ENCODE measurements at regions of chr6 and their contacts with region 1.

Region 1: DNA sequence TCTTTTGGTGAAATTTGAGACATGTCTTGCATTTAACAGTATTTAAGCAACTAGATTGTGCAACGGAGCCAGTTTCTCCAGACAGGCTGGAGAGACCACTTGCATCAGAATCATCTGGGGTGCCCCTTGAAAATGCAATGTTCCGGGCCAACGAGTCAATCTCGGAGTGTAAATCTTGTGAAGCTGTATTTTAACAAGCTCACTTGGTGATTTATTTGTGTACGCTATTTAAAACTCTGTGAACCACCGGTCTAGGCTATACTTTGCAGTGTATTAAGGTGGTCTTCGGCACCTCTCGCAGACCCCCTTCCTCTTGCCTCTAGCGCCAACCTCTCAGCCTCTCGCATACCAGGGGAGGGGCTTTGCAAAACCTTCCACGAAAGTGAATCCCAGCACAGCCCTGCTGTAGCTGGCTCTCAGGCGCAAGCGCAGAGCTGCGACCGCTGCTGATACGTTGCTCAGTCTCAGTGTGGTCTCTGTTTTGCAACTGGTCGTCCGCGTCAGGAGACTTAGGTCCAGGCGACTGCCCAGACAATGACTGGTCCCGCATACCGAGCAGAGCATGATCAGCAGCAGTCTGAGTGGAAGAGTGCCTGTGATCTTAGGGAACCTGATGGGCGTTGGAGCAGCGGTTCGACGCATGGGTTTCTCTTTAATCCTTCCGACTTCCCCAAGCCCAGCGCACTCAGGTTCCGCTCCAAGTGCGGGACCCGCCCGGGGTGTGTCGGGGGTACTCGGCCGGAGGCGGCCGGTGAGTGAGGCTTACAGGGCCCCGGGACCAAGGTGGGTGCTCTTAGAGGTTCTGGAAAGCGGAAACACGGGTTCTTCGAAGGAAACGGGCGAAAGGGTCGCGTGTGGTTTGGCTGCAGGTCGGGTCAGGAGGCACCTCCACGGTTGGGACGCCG is at the start of gene ZNF391:
- DNase-seq: peak; percentile 50 to 71 (median 62)
- H3K4me3 ChIP-seq: peak within 1 kb of the TSS; percentile 62 to 95
- H3K4me3 Mint-ChIP-seq: peak within 1 kb of the TSS; percentile 94 to 99 (median 97)
- H3K27ac ChIP-seq: peak within 1 kb of the TSS; percentile 43
- H3K27ac Mint-ChIP-seq: peak within 1 kb of the TSS; percentile 74 to 95 (median 91)
- H3K4me1 ChIP-seq: peaks cover 14% of the 10 kb centered on the region
- H3K4me1 Mint-ChIP-seq: peaks cover 7 to 23% (median 16%) of the 10 kb centered on the region in 4 donors
- H3K27me3 ChIP-seq: no peaks in the 10 kb centered on the region
- H3K27me3 Mint-ChIP-seq: peaks cover 0 to 1% of the 10 kb centered on the region in 2 donors
- total RNA-seq, gene ZNF391: 3.3 to 3.7 TPM

Region 2: GRCh38 chr6:27312146-27312949 is 76.2 kb before region 1 on chr6 and contains the start of gene POM121L2:
- CTCF ChIA-PET with region 1: no interaction called
- POLR2A ChIA-PET with region 1: no interaction called
- intact Hi-C with region 1: loop called (anchors 10 kb)
- DNase-seq: peak; percentile 50 to 68 (median 61)
- H3K4me3 ChIP-seq: peak within 1 kb of the TSS; percentile 44 to 57
- H3K4me3 Mint-ChIP-seq: peak within 1 kb of the TSS; percentile 81 to 86 (median 83)
- H3K27ac ChIP-seq: no peak within 1 kb of the TSS
- H3K27ac Mint-ChIP-seq: peak within 1 kb of the TSS in 3 of 7 donors; percentile 7 to 37 (median 21)
- H3K4me1 ChIP-seq: peaks cover 5% of the 10 kb centered on the region
- H3K4me1 Mint-ChIP-seq: peaks cover 0 to 14% (median 7%) of the 10 kb centered on the region in 4 donors
- H3K27me3 ChIP-seq: peaks cover 26% of the 10 kb centered on the region
- H3K27me3 Mint-ChIP-seq: peaks cover 39 to 55% of the 10 kb centered on the region in 2 donors
- total RNA-seq, gene POM121L2: not detected

Region 3: DNA sequence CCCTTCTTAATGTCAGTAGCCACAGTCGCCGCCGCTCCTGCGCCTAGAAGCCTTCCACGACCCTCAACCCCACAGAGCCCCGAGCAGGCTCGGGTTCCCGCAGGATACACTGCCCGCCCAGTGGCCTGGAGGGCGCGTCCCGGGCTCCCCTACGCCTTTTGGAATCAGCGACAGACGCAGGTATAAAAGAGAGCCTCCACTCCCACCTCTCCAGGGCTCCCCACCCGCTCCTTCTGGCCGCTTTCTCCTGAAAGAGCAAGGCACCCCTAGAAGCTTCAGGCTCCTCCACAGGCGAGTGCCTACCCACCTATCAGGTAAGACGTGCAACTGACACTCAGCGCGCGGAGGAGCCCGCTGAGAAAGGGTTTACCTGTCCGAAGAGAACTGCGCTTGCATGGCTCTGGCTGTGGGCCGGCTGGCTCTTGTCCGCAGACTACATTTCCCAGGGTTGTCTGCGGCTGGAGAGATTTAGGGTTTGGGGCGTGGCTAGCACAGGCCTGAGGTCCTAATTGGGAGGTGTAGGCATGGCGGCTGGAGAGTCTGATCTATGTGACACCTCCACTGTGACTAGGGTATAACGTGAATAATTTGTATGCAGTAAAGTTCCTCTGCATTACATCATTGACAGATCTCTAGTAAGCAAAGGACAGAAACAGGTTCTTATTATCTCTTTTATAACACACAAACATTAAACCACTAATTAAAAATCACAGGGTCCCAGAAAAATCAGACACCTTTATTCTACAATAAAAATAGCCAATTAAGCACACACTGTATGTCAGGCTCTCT is 13.5 kb before region 1 on chr6:
- CTCF ChIA-PET with region 1: no interaction called
- POLR2A ChIA-PET with region 1: interaction called, 3 read pairs
- intact Hi-C with region 1: loop called (anchors 1 kb)
- DNase-seq: peak; percentile 58 to 80 (median 70)
- H3K4me3 ChIP-seq: peak overlapping the region; percentile 50 to 59
- H3K4me3 Mint-ChIP-seq: peak overlapping the region; percentile 88 to 96 (median 91)
- H3K27ac ChIP-seq: peak overlapping the region; percentile 49
- H3K27ac Mint-ChIP-seq: peak overlapping the region; percentile 57 to 89 (median 78)
- H3K4me1 ChIP-seq: peaks cover 19% of the 10 kb centered on the region
- H3K4me1 Mint-ChIP-seq: peaks cover 12 to 22% (median 17%) of the 10 kb centered on the region in 4 donors
- H3K27me3 ChIP-seq: no peaks in the 10 kb centered on the region
- H3K27me3 Mint-ChIP-seq: peaks cover 0 to 3% of the 10 kb centered on the region in 2 donors

Region 4: DNA sequence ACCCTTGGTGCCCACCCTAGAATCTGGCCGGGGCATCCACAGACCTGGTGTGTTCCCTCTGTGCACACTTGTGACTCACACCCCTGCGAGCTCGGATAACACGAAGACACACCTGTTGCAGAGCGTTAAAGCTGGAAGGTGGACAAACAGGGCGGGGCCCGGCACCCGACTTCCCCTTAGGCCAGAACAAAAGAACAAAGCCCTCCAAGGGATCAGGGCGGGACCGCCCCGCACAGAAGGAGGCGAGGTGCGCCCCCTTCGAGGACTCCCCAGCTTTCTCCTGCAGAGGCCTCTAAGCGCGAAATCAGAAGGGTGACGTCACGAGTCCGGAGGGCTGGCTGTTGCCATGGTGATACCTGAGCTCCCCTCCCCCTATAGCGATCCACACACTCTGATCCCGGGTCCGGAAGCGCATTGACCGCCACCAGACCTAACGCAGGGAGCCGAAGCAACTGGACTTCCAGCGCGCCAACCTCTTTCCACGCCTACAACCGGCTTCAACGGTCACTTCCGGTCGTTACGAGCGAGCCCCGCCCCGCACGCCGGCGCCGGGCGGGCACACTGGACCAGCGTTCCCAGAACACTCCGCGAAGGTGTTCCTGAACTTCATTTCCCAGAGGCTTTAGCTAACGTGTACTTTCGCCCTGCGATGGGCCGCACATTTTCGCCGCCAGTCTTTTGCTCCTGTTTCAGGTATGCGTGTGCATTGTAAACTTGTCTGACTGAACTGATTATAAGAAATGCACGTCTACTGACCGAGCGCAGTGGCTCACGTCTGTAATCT is 84.3 kb after region 1 on chr6 and contains the start of gene ZNF184:
- CTCF ChIA-PET with region 1: no interaction called
- POLR2A ChIA-PET with region 1: interaction called, 13 read pairs
- intact Hi-C with region 1: loop called (anchors 2 kb)
- DNase-seq: peak; percentile 86 to 90 (median 89)
- H3K4me3 ChIP-seq: peak within 1 kb of the TSS; percentile 70 to 98
- H3K4me3 Mint-ChIP-seq: peak within 1 kb of the TSS; percentile 92 to 99 (median 96)
- H3K27ac ChIP-seq: peak within 1 kb of the TSS; percentile 92
- H3K27ac Mint-ChIP-seq: peak within 1 kb of the TSS; percentile 93 to 99 (median 96)
- H3K4me1 ChIP-seq: peaks cover 56% of the 10 kb centered on the region
- H3K4me1 Mint-ChIP-seq: peaks cover 33 to 65% (median 43%) of the 10 kb centered on the region in 4 donors
- H3K27me3 ChIP-seq: no peaks in the 10 kb centered on the region
- H3K27me3 Mint-ChIP-seq: no peaks in the 10 kb centered on the region
- total RNA-seq, gene ZNF184: 15.2 to 17.4 TPM

Region 5: GRCh38 chr6:27687154-27688013 is 298.8 kb after region 1 on chr6:
- CTCF ChIA-PET with region 1: no interaction called
- POLR2A ChIA-PET with region 1: no interaction called
- intact Hi-C with region 1: loop called (anchors 1 kb)
- DNase-seq: peak; percentile 66 to 81 (median 71)
- H3K4me3 ChIP-seq: peak overlapping the region; percentile 98
- H3K4me3 Mint-ChIP-seq: peak overlapping the region; percentile 86 to 96 (median 92)
- H3K27ac ChIP-seq: peak overlapping the region; percentile 65
- H3K27ac Mint-ChIP-seq: peak overlapping the region; percentile 76 to 100 (median 94)
- H3K4me1 ChIP-seq: peaks cover 16% of the 10 kb centered on the region
- H3K4me1 Mint-ChIP-seq: peaks cover 16 to 26% (median 20%) of the 10 kb centered on the region in 4 donors
- H3K27me3 ChIP-seq: peaks cover under 1% of the 10 kb centered on the region
- H3K27me3 Mint-ChIP-seq: peaks cover 6 to 14% of the 10 kb centered on the region in 2 donors

Region 6: GRCh38 chr6:28252009-28252975 is 863.7 kb after region 1 on chr6 and contains the start of gene ZKSCAN4:
- CTCF ChIA-PET with region 1: no interaction called
- POLR2A ChIA-PET with region 1: no interaction called
- intact Hi-C with region 1: loop called (anchors 5 kb)
- DNase-seq: peak; percentile 79 to 82 (median 80)
- H3K4me3 ChIP-seq: peak within 1 kb of the TSS; percentile 98 to 99
- H3K4me3 Mint-ChIP-seq: peak within 1 kb of the TSS; percentile 94 to 99 (median 97)
- H3K27ac ChIP-seq: peak within 1 kb of the TSS; percentile 52
- H3K27ac Mint-ChIP-seq: peak within 1 kb of the TSS; percentile 75 to 95 (median 89)
- H3K4me1 ChIP-seq: peaks cover 22% of the 10 kb centered on the region
- H3K4me1 Mint-ChIP-seq: peaks cover 22 to 38% (median 31%) of the 10 kb centered on the region in 4 donors
- H3K27me3 ChIP-seq: no peaks in the 10 kb centered on the region
- H3K27me3 Mint-ChIP-seq: no peaks in the 10 kb centered on the region
- total RNA-seq, gene ZKSCAN4: 9.9 to 11.1 TPM

Measured in CD4-positive, alpha-beta memory T cell (primary cell).